Endothelial cell of umbilical vein (primary cell): ENCODE measurements at regions of chr18 and their contacts with region 1.

Region 1: DNA sequence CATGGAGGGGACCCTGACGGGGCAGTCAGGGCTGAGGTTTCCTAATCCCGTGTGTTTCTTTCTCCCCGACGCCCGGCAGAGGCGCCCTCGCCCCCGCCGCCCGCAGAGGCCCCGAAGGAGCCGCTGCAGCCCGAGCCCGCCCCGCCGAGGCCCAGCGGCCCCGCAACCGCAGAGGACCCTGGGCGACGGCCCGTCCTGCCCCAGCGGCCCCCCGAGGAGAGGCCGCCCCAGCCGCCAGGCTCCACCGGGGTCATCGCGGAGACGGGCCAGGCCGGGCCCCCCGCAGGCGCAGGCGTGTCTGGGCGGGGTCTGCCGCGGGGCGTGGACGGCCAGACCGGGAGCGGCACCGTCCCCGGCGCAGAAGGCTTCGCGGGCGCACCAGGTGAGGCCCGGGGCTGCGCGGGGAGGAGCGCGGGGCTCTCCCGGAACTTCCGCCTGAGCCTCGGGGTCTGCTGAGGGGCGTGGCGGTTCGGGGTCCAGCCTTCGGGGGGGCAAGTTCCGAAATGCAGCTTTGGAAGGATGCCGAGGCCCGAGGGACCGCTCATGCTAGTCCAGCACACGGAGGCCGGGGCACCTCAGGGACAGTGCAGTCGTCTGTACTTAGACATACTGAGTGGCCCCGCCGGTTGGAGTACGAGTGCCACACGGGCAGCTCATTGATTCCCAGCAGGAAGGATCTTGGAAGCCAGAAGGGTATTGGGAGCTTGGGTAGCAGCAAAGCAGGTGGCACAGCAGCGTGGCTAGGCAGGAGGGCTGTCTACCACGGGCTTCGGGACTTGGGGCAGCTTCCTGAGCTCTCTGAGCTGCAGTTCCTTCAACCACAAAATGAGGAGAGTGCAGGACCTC is 60.1 kb downstream of the EMILIN2 start:
- DNase-seq: peak; percentile 24
- H3K4me3 ChIP-seq: peak overlapping the region; percentile 48 to 56 (median 55)
- H3K27ac ChIP-seq: peak overlapping the region; percentile 50
- H3K4me1 ChIP-seq: peaks cover 13% of the 10 kb centered on the region
- H3K27me3 ChIP-seq: no peaks in the 10 kb centered on the region
- CTCF ChIP-seq: peak; percentile 30 to 51
- POLR2A ChIP-seq: no peak

Region 2: GRCh38 chr18:2776601-2777000 is 130.3 kb before region 1 on chr18:
- CTCF ChIA-PET with region 1: no interaction called
- POLR2A ChIA-PET with region 1: no interaction called
- dilution Hi-C with region 1: no loop called
- intact Hi-C with region 1: loop called (anchors 5 kb)
- DNase-seq: peak; percentile 92
- H3K4me3 ChIP-seq: no peak overlapping the region
- H3K27ac ChIP-seq: peak overlapping the region; percentile 71
- H3K4me1 ChIP-seq: peaks cover 7% of the 10 kb centered on the region
- H3K27me3 ChIP-seq: no peaks in the 10 kb centered on the region
- CTCF ChIP-seq: no peak
- POLR2A ChIP-seq: peak; percentile 41

Region 3: DNA sequence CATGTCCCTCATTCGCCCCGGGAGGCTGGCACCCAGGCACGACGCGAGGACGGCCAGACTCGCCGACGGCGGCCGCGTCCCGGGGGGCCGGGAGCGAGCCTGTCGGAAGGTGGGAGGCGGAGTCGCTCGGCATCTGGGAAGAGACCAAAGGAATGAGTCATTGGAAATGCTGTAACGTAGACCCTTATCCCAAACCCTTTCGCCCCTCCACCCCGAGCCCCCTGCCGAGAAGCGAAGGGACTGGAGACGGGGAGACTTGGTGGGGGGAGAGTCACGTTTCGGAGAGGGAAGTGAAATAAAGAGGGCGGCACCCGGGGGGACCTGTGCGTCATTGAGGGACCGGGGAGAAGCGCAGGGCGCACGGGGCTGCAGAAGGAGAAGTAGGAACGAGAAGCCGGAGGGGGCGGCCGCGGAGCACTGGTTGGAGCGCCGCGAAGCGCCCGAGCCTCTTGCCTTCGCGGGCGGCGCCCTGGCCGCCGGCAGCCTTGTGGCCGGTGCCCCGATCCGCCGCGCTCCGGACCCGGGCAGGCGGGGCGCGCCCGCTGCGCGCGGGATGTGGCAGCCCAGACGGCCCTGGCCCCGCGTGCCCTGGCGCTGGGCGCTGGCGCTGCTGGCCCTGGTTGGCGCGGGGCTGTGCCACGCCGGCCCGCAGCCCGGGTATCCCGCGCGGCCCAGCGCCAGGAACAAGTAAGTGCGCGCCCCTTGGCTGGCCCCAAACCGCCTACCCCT is 60.1 kb before region 1 on chr18 and contains the start of gene EMILIN2:
- CTCF ChIA-PET with region 1: interaction called, 5 read pairs
- POLR2A ChIA-PET with region 1: no interaction called
- dilution Hi-C with region 1: no loop called
- intact Hi-C with region 1: loop called (anchors 5 kb)
- DNase-seq: peak; percentile 18
- H3K4me3 ChIP-seq: peak within 1 kb of the TSS; percentile 22 to 34 (median 30)
- H3K27ac ChIP-seq: no peak within 1 kb of the TSS
- H3K4me1 ChIP-seq: peaks cover 19% of the 10 kb centered on the region
- H3K27me3 ChIP-seq: peaks cover 37 to 71% of the 10 kb centered on the region in 2 experiments
- CTCF ChIP-seq: no peak
- POLR2A ChIP-seq: no peak
- total RNA-seq, gene EMILIN2: 11.3 and 13.4 TPM in 2 replicates